Esophagus muscularis mucosa (tissue), 4 donors: ENCODE measurements at regions of chr5 and their contacts with region 1.

Region 1: DNA sequence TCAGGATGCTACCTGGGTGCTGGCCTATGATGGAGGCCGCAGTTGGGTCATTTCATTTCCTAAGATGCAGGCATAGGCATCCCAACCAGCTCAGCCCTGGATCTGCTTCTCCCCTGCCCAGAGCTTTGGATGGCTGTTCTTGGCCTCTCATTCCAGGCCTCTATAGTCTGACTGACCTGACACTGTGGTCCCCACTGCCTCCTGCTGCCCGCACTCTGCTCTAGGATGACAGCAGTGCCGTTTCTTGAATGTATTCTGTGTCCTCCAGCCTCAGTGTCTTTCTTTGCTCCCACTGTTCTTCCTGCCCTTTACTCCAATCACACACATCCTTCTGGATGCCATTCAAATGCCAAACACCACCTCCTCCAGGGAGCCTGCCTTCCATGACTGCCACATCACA is 235.7 kb downstream of the HSPA4 start:
- DNase-seq: no peak
- H3K4me3 ChIP-seq: no peak overlapping the region
- H3K27ac ChIP-seq: no peak overlapping the region
- H3K4me1 ChIP-seq: peaks cover 0 to 15% (median 11%) of the 10 kb centered on the region in 4 donors
- H3K27me3 ChIP-seq: no peaks in the 10 kb centered on the region
- CTCF ChIP-seq: peak; percentile 20 to 24 (median 22)
- EP300 ChIP-seq: no peak
- POLR2A ChIP-seq: no peak

Region 2: DNA sequence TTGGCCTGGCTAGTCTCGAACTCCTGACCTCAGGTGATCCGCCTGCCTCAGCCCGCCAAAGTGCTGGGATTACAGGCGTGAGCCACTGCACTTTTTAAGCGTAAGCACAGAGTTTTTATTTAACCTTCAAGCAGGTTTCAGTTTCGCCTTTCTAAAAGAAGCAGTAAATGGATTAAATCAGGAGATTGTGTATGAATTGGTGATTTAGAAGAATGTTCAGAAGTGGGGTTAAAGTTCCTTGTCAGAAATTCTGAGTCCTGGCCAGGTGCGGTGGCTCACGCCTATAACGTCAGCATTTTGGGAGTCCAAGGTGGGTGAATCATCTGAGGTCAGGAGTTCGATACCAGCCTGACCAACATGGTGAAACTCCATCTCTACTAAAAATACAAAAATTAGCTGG is 223.5 kb before region 1 on chr5:
- intact Hi-C with region 1: no loop called
- DNase-seq: no peak
- H3K4me3 ChIP-seq: no peak overlapping the region
- H3K27ac ChIP-seq: no peak overlapping the region
- H3K4me1 ChIP-seq: peaks cover 0 to 16% (median 12%) of the 10 kb centered on the region in 4 donors
- H3K27me3 ChIP-seq: no peaks in the 10 kb centered on the region
- CTCF ChIP-seq: no peak
- EP300 ChIP-seq: no peak
- POLR2A ChIP-seq: no peak

Region 3: GRCh38 chr5:133111299-133111698 is 176.2 kb before region 1 on chr5:
- intact Hi-C with region 1: loop called (anchors 10 kb)
- DNase-seq: peak; percentile 95
- H3K4me3 ChIP-seq: no peak overlapping the region
- H3K27ac ChIP-seq: no peak overlapping the region
- H3K4me1 ChIP-seq: peaks cover 0 to 17% (median 9%) of the 10 kb centered on the region in 4 donors
- H3K27me3 ChIP-seq: no peaks in the 10 kb centered on the region
- CTCF ChIP-seq: peak; percentile 78 to 93 (median 84)
- EP300 ChIP-seq: no peak
- POLR2A ChIP-seq: no peak